ENCODE measurements at regions of chr2 and their contacts with region 1.

Region 1: GRCh38 chr2:177212106-177212890 is at the start of gene HNRNPA3:
- DNase-seq: peak; percentile 99 to 100
- H3K4me3 ChIP-seq: peak within 1 kb of the TSS; percentile 74 to 96
- H3K27ac ChIP-seq: peak within 1 kb of the TSS; percentile 100
- H3K4me1 ChIP-seq: peaks cover 54% of the 10 kb centered on the region
- H3K27me3 ChIP-seq: no peaks in the 10 kb centered on the region
- CTCF ChIP-seq: peak; percentile 0 to 34 (median 25)
- POLR2A ChIP-seq: peak in 1 of 2 donors; percentile 92
- total RNA-seq, gene HNRNPA3: 77.8 TPM

Region 2: DNA sequence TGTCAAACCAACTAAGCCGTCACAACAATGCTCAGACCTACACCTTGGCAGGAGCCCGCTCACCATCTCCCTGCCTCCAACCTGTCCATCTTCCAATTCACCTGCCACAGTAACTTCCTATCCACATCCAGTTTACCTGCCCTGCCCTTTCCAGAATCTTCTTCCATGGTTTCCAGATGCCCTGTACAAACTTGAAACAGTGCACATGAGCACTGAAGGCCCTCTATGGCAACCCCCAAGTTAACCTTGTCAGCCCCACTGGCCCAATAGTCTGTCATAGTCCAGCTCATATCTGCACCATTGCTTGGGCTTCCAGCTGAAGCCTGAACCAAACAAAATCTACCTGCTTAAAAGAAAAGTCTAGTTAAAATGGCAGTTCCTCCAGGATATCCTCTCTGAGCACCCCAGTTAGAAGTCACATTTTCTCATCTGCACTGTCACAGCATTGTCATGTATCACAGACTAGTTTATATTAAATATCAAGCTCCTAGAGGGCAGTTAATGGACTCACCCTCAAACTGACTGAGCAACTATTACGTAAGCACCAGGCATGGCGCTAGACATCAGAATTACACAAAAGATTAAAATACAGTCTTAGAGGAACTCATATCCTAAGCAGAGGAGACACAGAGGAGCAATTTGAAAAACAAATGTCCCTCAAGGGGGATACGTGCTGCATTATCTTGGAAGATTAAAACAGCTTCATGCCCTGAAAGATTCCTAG is 40.7 kb after region 1 on chr2:
- intact Hi-C with region 1: no loop called
- DNase-seq: no peak
- H3K4me3 ChIP-seq: no peak overlapping the region
- H3K27ac ChIP-seq: peak overlapping the region; percentile 81
- H3K4me1 ChIP-seq: peaks cover 100% of the 10 kb centered on the region
- H3K27me3 ChIP-seq: no peaks in the 10 kb centered on the region
- CTCF ChIP-seq: no peak
- POLR2A ChIP-seq: no peak

Region 3: DNA sequence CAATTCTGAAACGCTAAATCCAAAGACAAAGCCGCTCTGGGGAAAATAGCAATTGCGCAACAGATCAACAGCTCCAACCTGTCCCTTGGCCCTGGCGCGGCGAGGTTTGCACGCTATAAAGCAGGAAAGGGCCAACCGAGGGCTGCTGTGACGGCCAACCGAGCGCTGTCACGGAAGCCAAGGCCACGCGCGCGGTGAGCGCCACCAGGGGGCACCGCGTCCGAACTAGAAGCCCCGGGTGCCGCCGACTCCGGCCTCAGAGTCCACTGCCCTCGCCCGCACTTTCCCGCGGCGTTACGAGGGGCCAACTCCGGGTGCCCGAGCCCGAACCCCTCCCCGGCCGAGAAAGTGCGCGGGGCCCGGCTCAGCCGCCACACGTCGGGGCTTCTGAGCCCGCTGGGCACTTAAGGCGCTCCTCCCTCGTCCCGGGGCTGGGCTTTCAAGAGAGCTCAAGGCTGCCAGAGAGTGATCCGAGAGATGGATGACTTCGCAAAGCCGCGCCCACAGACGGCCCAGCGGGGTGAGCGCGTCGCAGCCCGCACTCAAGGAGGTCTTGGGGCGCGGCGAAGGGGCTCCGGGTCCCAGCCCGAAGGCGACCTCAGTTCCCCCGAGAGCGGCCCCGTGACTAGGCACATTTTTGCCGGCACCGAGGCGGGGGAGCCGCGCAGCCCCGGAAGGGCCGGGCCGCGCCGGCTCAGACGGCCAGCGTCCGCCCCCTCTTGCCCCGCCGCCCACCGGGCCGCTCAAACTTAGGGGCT is 51.3 kb after region 1 on chr2:
- intact Hi-C with region 1: loop called (anchors 2 kb)
- DNase-seq: peak; percentile 98
- H3K4me3 ChIP-seq: peak overlapping the region; percentile 74 to 97
- H3K27ac ChIP-seq: peak overlapping the region; percentile 100
- H3K4me1 ChIP-seq: peaks cover 59% of the 10 kb centered on the region
- H3K27me3 ChIP-seq: no peaks in the 10 kb centered on the region
- CTCF ChIP-seq: peak; percentile 50 to 92 (median 68)
- POLR2A ChIP-seq: peak in 1 of 2 donors; percentile 48

Region 4: GRCh38 chr2:177275041-177276020 is 63.0 kb after region 1 on chr2:
- intact Hi-C with region 1: no loop called
- DNase-seq: no peak
- H3K4me3 ChIP-seq: no peak overlapping the region
- H3K27ac ChIP-seq: peak overlapping the region; percentile 59
- H3K4me1 ChIP-seq: peaks cover 20% of the 10 kb centered on the region
- H3K27me3 ChIP-seq: no peaks in the 10 kb centered on the region
- CTCF ChIP-seq: no peak
- POLR2A ChIP-seq: no peak

Region 5: GRCh38 chr2:177306550-177306949 is 94.3 kb after region 1 on chr2:
- intact Hi-C with region 1: no loop called
- DNase-seq: no peak
- H3K4me3 ChIP-seq: no peak overlapping the region
- H3K27ac ChIP-seq: peak overlapping the region; percentile 36
- H3K4me1 ChIP-seq: peaks cover 9% of the 10 kb centered on the region
- H3K27me3 ChIP-seq: no peaks in the 10 kb centered on the region
- CTCF ChIP-seq: no peak
- POLR2A ChIP-seq: no peak